MCF 10A (cell line): ENCODE measurements at regions of chr1 and their contacts with region 1.

Region 1: GRCh38 chr1:224329842-224330753 is at the start of gene NVL:
- DNase-seq: peak; percentile 98
- H3K4me3 Mint-ChIP-seq: peak within 1 kb of the TSS; percentile 86
- H3K27ac Mint-ChIP-seq: peak within 1 kb of the TSS; percentile 99
- H3K4me1 Mint-ChIP-seq: peaks cover 33% of the 10 kb centered on the region
- H3K27me3 Mint-ChIP-seq: no peaks in the 10 kb centered on the region
- CTCF ChIP-seq: no peak
- total RNA-seq, gene NVL: 69.8 and 81.5 TPM in 2 replicates

Region 2: GRCh38 chr1:223811634-223812415 is 518.3 kb before region 1 on chr1:
- CTCF ChIA-PET with region 1: no interaction called
- POLR2A ChIA-PET with region 1: no interaction called
- intact Hi-C with region 1: loop called (anchors 1 kb)
- DNase-seq: peak; percentile 74
- H3K4me3 Mint-ChIP-seq: no peak overlapping the region
- H3K27ac Mint-ChIP-seq: no peak overlapping the region
- H3K4me1 Mint-ChIP-seq: peaks cover 28% of the 10 kb centered on the region
- H3K27me3 Mint-ChIP-seq: no peaks in the 10 kb centered on the region
- CTCF ChIP-seq: peak; percentile 86

Region 3: GRCh38 chr1:224113918-224114786 is 215.9 kb before region 1 on chr1 and contains the start of gene FBXO28:
- CTCF ChIA-PET with region 1: interaction called, 80 read pairs
- POLR2A ChIA-PET with region 1: interaction called, 109 read pairs
- intact Hi-C with region 1: loop called (anchors 1 kb)
- DNase-seq: peak; percentile 99
- H3K4me3 Mint-ChIP-seq: peak within 1 kb of the TSS; percentile 90
- H3K27ac Mint-ChIP-seq: peak within 1 kb of the TSS; percentile 82
- H3K4me1 Mint-ChIP-seq: peaks cover 8% of the 10 kb centered on the region
- H3K27me3 Mint-ChIP-seq: no peaks in the 10 kb centered on the region
- CTCF ChIP-seq: no peak
- total RNA-seq, gene FBXO28: 97.6 and 110 TPM in 2 replicates

Region 4: DNA sequence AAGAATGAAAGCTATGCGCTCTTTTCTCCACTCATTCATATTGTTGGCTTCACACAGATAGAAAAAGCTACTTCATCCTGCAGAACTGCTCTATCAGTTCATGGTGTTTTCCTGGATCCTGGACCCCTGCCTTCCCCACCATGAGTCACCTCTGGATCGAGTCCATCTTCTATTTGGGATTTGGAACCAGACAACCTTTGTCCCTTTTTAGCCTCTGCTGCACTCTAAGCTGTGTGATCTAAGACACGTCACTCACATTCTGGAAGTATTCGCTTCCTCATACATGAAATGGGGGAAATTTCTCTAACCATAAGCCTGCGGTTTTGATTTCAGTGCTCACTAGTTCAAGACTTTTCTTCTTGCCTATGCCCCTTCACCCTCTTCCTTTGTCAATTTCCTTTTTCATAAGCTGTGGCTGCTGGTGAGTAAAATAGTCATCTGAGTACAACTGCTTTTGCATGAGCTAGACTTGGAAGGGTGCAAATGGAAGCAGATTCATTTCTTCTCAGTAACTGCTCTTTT is 161.2 kb before region 1 on chr1:
- CTCF ChIA-PET with region 1: interaction called, 16 read pairs
- POLR2A ChIA-PET with region 1: interaction called, 9 read pairs
- intact Hi-C with region 1: loop called (anchors 1 kb)
- DNase-seq: peak; percentile 50
- H3K4me3 Mint-ChIP-seq: no peak overlapping the region
- H3K27ac Mint-ChIP-seq: no peak overlapping the region
- H3K4me1 Mint-ChIP-seq: peaks cover 12% of the 10 kb centered on the region
- H3K27me3 Mint-ChIP-seq: peaks cover 25% of the 10 kb centered on the region
- CTCF ChIP-seq: no peak

Region 5: GRCh38 chr1:224300314-224300713 is 29.8 kb before region 1 on chr1:
- CTCF ChIA-PET with region 1: interaction called, 9 read pairs
- POLR2A ChIA-PET with region 1: interaction called, 14 read pairs
- intact Hi-C with region 1: no loop called
- DNase-seq: peak; percentile 90
- H3K4me3 Mint-ChIP-seq: no peak overlapping the region
- H3K27ac Mint-ChIP-seq: peak overlapping the region; percentile 65
- H3K4me1 Mint-ChIP-seq: peaks cover 6% of the 10 kb centered on the region
- H3K27me3 Mint-ChIP-seq: no peaks in the 10 kb centered on the region
- CTCF ChIP-seq: no peak

Region 6: DNA sequence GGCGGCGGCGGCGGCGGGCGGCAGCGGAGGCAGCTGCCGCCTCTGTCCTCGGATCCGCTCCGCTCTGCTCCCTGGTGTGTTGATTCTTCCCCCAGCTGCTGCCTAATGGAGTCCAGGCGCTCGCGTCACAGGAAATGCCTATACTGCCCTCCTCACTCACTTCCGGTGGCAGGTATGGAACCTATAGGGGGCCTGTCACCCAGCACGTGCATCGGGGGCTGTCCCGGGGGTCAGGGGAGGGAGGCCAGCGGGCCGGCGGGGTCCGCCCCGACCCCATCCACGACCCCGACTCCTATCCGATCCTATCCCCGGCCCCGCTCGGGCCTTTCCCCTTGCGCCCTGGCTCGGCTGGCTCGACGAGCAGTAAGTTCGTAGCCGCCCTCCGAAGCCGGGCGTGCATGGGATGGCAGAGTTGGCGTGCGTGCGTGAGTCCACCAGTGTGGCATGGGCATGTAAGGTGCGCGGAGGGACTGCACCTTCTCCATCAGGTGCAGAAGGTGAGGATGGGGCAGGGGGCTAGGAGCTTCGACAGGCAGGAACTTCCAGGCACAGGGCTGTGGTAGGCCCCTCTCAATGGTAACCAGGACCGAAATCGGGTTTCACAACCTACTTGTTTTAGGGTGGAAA is 104.7 kb after region 1 on chr1 and contains the start of gene WDR26:
- CTCF ChIA-PET with region 1: no interaction called
- POLR2A ChIA-PET with region 1: interaction called, 15 read pairs
- intact Hi-C with region 1: no loop called
- DNase-seq: peak; percentile 96
- H3K4me3 Mint-ChIP-seq: peak within 1 kb of the TSS; percentile 80
- H3K27ac Mint-ChIP-seq: peak within 1 kb of the TSS; percentile 69
- H3K4me1 Mint-ChIP-seq: peaks cover 44% of the 10 kb centered on the region
- H3K27me3 Mint-ChIP-seq: no peaks in the 10 kb centered on the region
- CTCF ChIP-seq: peak; percentile 18
- total RNA-seq, gene WDR26: 149 and 156 TPM in 2 replicates

Region 7: GRCh38 chr1:224488806-224489499 is 158.9 kb after region 1 on chr1:
- CTCF ChIA-PET with region 1: no interaction called
- POLR2A ChIA-PET with region 1: no interaction called
- intact Hi-C with region 1: no loop called
- DNase-seq: peak; percentile 56
- H3K4me3 Mint-ChIP-seq: no peak overlapping the region
- H3K27ac Mint-ChIP-seq: peak overlapping the region; percentile 61
- H3K4me1 Mint-ChIP-seq: peaks cover 28% of the 10 kb centered on the region
- H3K27me3 Mint-ChIP-seq: no peaks in the 10 kb centered on the region
- CTCF ChIP-seq: no peak

Region 8: DNA sequence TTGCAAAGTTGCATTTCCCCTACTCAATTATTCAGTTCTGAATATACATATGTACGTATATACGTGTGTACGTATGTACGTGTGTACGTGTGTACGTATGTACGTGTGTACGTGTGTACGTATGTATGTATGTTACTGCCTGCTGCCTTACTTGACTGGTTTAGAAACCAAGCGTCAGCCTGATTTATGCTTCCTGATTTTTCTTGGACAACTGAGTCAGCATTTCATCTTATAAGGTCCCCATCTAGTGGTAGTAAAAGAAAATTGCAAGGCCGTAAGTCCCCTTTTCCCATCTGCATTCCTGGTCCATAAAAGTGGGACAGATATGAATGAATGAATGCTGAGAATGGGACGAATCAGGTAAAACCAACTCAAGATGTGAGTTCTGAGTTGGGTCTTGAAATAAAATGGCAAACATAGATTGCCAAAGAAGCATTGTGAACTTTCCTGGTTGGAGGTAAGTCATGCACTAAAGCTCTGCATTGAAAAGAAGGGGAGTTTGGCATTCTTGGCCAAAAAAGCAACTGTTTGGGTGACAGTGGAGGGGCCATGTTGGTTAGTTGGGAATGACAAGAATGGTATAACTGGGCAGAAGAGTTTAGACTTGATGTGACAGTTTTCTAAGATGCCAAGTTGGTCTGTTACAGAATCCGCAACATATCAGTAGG is 522.9 kb after region 1 on chr1:
- CTCF ChIA-PET with region 1: no interaction called
- POLR2A ChIA-PET with region 1: no interaction called
- intact Hi-C with region 1: no loop called
- DNase-seq: peak; percentile 81
- H3K4me3 Mint-ChIP-seq: no peak overlapping the region
- H3K27ac Mint-ChIP-seq: no peak overlapping the region
- H3K4me1 Mint-ChIP-seq: peaks cover 6% of the 10 kb centered on the region
- H3K27me3 Mint-ChIP-seq: peaks cover 11% of the 10 kb centered on the region
- CTCF ChIP-seq: peak; percentile 97